PC-3 (cell line): ENCODE measurements at regions of chr4 and their contacts with region 1.

Region 1: GRCh38 chr4:21469438-21470300 is 478.9 kb downstream of the KCNIP4 start:
- DNase-seq: peak; percentile 15
- ATAC-seq: no peak
- H3K4me3 ChIP-seq: no peak overlapping the region
- H3K27ac ChIP-seq: no peak overlapping the region
- H3K4me1 ChIP-seq: no peaks in the 10 kb centered on the region; the same call in 1 of the 2 replicates
- H3K27me3 ChIP-seq: peaks cover 11% of the 10 kb centered on the region; the same call in 1 of the 2 replicates
- CTCF ChIP-seq: peak; percentile 58

Region 2: DNA sequence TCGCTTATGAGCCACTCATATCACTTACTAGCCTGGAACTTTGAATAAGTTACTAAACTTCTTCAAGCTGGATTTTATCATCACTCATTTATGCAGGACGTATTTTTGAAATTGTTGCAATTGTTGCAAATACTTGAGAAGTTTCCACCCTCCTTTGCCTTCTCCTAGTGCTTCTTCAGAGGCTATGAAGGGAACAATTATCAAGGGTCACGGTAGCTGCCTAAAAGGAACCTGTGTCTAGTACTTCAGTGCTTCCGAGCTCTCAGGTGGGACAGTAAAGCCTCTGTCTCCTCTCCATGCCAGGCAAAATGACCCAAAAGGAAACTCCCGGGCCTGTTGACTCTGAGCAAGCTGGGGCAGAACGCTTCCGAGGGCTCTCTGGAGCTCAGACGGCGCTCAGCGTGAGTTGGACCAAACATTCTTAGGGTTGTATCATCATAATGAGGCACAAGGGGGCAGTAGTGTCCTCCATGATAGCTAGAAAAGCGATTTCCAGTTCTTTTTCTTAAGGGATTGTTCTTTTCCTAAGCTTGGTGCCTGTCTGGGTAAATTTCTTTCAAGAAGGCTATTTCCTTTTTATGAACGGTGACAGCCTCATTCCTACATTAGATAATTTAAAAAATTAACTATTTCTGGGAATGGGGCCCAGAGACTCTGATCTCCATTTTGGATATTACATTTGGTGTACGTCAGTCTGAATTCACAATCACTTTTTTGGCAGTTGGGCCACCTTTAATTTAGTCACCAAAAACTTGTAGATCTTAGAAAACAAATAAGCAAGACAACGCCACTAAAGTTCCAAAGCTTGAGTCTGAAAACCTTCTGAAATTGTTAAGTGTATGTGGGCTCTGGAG is 696.3 kb before region 1 on chr4:
- CTCF ChIA-PET with region 1: no interaction called
- POLR2A ChIA-PET with region 1: no interaction called
- intact Hi-C with region 1: loop called (anchors 1 kb)
- DNase-seq: peak; percentile 72
- ATAC-seq: peak; percentile 79
- H3K4me3 ChIP-seq: no peak overlapping the region
- H3K27ac ChIP-seq: no peak overlapping the region
- H3K4me1 ChIP-seq: no peaks in the 10 kb centered on the region
- H3K27me3 ChIP-seq: peaks cover 11% of the 10 kb centered on the region
- CTCF ChIP-seq: peak; percentile 73

Region 3: GRCh38 chr4:20787940-20788665 is 681.6 kb before region 1 on chr4:
- CTCF ChIA-PET with region 1: no interaction called
- POLR2A ChIA-PET with region 1: no interaction called
- intact Hi-C with region 1: loop called (anchors 5 kb)
- DNase-seq: no peak
- ATAC-seq: no peak
- H3K4me3 ChIP-seq: no peak overlapping the region
- H3K27ac ChIP-seq: no peak overlapping the region
- H3K4me1 ChIP-seq: no peaks in the 10 kb centered on the region
- H3K27me3 ChIP-seq: no peaks in the 10 kb centered on the region
- CTCF ChIP-seq: no peak

Region 4: DNA sequence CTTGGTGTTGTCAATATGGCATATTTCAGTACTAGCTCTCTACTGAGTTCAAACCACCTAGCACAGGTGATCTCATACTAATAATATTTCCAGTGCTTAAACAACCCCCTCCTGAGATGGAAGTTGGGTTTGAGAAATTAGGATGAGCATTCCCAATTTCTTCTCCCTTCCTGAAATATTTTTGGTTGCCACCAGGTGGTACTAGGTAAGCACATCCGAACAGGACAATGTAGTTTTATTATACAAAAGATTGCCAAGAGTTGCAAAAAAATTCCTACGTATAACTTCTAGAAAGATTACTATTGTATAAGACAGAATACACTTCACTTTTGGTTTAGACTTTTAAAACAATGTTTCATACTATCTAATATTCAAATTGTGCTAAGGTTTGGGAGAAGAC is 284.9 kb before region 1 on chr4:
- CTCF ChIA-PET with region 1: no interaction called
- POLR2A ChIA-PET with region 1: no interaction called
- intact Hi-C with region 1: loop called (anchors 10 kb)
- DNase-seq: peak; percentile 18
- ATAC-seq: no peak
- H3K4me3 ChIP-seq: no peak overlapping the region
- H3K27ac ChIP-seq: no peak overlapping the region
- H3K4me1 ChIP-seq: no peaks in the 10 kb centered on the region
- H3K27me3 ChIP-seq: no peaks in the 10 kb centered on the region
- CTCF ChIP-seq: peak; percentile 39; the same call in 1 of the 2 replicates